ENCODE measurements at regions of chr9 and their contacts with region 1.

Region 1: DNA sequence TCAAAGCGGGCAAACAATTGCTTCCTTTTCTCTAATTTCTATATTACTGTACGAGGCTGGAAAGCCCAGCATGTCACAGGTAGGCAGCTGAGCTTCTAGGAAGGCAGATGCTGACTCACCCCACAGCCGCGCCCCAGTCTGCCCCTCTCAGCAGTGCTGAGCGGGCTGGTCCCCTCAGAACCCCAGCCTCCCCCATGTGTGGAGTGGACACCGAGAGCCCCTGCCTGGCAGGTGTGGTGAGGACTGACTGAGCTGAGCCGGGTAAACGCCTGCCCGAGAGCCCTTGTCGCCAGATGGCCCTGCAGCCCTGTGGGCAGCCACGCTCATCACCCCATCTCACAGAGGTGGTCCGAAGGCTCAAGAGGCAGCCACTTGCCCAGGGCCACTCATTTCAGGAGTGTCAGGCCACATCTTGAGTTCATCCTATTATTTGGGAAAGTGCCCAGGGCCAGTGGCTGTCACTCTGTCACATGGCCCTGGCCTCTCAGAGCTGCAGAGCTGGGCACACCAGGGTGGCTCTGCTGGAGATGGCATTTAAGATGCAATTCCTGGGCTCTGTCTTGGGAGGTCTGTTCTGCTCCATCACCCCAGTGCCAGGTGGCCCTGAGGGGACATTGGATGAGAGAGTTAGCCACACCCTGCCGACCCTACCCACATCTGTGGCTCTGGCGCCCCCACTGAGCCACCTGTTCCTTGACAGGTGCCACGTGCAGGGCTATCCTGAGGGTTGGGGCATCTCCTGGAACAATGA is 12.4 kb downstream of the CARD19 start:
- DNase-seq: no peak
- ATAC-seq: peak; percentile 51
- H3K4me3 ChIP-seq: no peak overlapping the region
- H3K27ac ChIP-seq: peak overlapping the region; percentile 23; the same call in 1 of the 2 replicates
- H3K4me1 ChIP-seq: peaks cover 0 to 18% of the 10 kb centered on the region in 2 experiments; a peak in 2 of 4 replicates
- H3K27me3 ChIP-seq: no peaks in the 10 kb centered on the region
- CTCF ChIP-seq: no peak
- POLR2A ChIP-seq: no peak
- RAD21 ChIP-seq: no peak

Region 2: DNA sequence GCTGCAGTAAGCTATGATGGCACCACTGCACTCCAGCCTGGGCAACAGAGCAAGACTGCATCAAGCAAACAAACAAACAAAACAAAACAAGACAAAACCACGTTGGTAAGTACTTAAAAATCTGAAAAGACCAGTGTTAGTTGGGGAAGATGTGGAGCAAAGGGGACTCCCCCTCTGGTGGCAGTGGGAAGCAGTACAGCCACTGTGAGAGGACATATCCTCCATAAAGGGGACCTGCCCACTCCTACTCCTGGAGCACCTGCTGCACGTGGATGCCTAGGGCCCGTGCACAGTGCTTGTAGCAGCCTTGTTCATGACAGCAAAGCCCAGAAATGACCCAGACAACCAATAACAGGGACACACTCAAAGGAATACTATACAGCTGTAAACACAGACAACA is 421.5 kb before region 1 on chr9:
- CTCF ChIA-PET with region 1: no interaction called
- POLR2A ChIA-PET with region 1: no interaction called
- RAD21 ChIA-PET with region 1: no interaction called
- intact Hi-C with region 1: no loop called
- DNase-seq: no peak
- ATAC-seq: peak; percentile 98
- H3K4me3 ChIP-seq: no peak overlapping the region
- H3K27ac ChIP-seq: no peak overlapping the region
- H3K4me1 ChIP-seq: no peaks in the 10 kb centered on the region
- H3K27me3 ChIP-seq: no peaks in the 10 kb centered on the region
- CTCF ChIP-seq: peak in 2 of 3 experiments; percentile 57 to 67; a peak in 4 of 6 replicates
- POLR2A ChIP-seq: no peak
- RAD21 ChIP-seq: no peak

Region 3: DNA sequence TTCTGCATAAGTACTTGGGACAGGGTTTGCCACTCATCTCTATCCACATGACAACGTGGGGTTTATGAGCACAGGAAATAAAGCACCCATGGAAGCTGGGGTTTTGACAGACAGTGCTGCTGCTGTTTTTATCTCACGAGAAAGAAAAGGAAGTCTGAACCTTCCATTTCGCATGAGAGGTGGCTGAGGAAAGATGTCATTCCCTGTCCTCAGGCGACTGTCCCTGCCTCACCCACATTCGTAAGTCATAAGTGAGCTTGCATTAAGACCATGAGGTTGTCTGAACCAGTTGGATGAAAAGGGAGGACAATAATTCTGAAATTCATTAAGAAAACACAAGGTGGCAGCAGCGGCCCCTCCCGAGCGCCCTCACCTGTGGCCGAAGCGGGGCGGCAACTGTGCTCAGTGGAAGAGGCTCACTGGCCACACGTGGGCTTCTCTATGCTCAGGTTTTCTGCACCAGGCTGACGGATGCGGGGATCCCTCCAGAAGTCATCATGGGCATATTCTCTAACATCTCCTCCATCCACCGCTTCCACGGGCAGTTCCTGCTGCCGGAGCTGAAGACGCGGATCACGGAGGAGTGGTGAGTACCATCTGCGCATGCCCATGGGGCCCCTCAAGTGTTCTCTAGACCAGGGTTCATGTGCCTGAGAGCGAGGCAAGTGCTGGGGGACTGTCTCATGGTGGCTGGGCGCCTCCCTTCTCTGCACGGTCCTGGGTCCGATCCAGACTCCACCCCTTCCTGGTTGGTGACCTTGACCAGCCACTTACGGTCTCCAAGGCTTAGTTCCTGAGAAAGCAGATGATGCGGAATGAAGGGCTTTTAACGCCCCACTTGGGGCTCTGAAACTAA is 104.7 kb before region 1 on chr9:
- CTCF ChIA-PET with region 1: interaction called, 18 read pairs
- POLR2A ChIA-PET with region 1: no interaction called
- RAD21 ChIA-PET with region 1: no interaction called
- intact Hi-C with region 1: no loop called
- DNase-seq: peak; percentile 73
- ATAC-seq: peak; percentile 94
- H3K4me3 ChIP-seq: peak overlapping the region; percentile 49 to 60
- H3K27ac ChIP-seq: peak overlapping the region; percentile 47; the same call in 1 of the 2 replicates
- H3K4me1 ChIP-seq: peaks cover 10 to 18% of the 10 kb centered on the region in 2 experiments; a peak in 3 of 4 replicates
- H3K27me3 ChIP-seq: no peaks in the 10 kb centered on the region
- CTCF ChIP-seq: peak; percentile 67 to 97 (median 82)
- POLR2A ChIP-seq: no peak
- RAD21 ChIP-seq: peak; percentile 94

Region 4: DNA sequence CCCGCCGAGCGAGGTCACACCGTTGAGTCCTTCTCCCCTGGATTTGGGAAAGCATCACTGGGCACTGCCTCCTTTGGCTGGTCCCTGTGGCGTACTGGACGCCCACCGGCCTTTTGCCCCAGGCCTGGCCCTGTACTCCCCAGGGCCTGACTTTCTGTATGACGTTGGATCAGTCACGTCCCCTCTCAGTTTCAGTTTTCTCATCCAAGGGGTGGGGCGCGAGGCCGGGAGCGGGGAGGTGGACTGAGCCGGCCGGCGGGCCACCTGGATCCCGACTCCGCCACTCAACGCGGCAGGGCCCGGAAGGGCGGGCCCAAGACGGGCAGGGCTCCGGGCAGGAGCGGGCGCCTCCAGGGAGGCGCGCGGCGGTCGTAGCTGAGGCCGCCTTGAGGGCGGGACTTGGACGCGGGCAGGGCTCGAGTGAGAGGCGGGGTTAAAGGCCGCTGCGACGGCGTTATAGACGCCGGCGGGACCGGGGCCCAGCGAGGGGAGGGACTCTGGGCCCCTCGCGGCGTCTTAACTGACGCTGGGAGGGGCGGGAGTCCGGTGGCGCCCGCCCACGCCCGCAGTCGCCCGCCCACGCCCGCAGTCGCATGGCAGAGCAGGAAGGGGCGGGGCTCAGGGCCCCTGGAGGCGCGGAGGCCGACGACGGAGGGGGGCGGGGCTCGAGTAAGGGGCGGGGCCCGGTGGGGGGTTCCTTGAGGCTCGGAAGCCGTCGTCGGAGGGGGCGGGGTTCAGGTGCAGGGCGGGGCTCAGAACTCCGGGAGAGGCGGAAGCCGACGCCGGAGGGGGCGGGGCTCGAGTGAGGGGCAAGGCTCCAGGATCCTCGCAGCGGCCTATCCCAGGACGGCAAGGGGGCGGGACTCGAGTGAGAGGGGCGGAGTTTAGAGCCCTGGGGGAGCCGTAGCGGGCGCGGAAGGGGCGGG is 13.0 kb before region 1 on chr9:
- CTCF ChIA-PET with region 1: interaction called, 12 read pairs
- POLR2A ChIA-PET with region 1: no interaction called
- RAD21 ChIA-PET with region 1: no interaction called
- intact Hi-C with region 1: no loop called
- DNase-seq: peak; percentile 96
- ATAC-seq: peak; percentile 84
- H3K4me3 ChIP-seq: peak overlapping the region; percentile 63 to 94
- H3K27ac ChIP-seq: peak overlapping the region; percentile 81
- H3K4me1 ChIP-seq: peaks cover 41 to 81% of the 10 kb centered on the region in 2 experiments
- H3K27me3 ChIP-seq: no peaks in the 10 kb centered on the region
- CTCF ChIP-seq: no peak
- POLR2A ChIP-seq: peak; percentile 48
- RAD21 ChIP-seq: no peak

Region 5: GRCh38 chr9:93119953-93120845 is 11.7 kb after region 1 on chr9:
- CTCF ChIA-PET with region 1: interaction called, 35 read pairs
- POLR2A ChIA-PET with region 1: interaction called, 5 read pairs
- RAD21 ChIA-PET with region 1: interaction called in 1 of 2 experiments, 3 read pairs
- intact Hi-C with region 1: no loop called
- DNase-seq: peak; percentile 83
- ATAC-seq: peak; percentile 94
- H3K4me3 ChIP-seq: no peak overlapping the region
- H3K27ac ChIP-seq: peak overlapping the region; percentile 82
- H3K4me1 ChIP-seq: peaks cover 13 to 19% of the 10 kb centered on the region in 2 experiments
- H3K27me3 ChIP-seq: no peaks in the 10 kb centered on the region
- CTCF ChIP-seq: peak in 2 of 3 experiments; percentile 25 to 45; a peak in 3 of 6 replicates
- POLR2A ChIP-seq: no peak
- RAD21 ChIP-seq: no peak

Region 6: GRCh38 chr9:93154315-93154903 is 45.9 kb after region 1 on chr9:
- CTCF ChIA-PET with region 1: interaction called, 5 read pairs
- POLR2A ChIA-PET with region 1: no interaction called
- RAD21 ChIA-PET with region 1: no interaction called
- intact Hi-C with region 1: loop called (anchors 5 kb)
- DNase-seq: no peak
- ATAC-seq: peak; percentile 89
- H3K4me3 ChIP-seq: no peak overlapping the region
- H3K27ac ChIP-seq: no peak overlapping the region
- H3K4me1 ChIP-seq: peaks cover 0 to 2% of the 10 kb centered on the region in 2 experiments; a peak in 3 of 4 replicates
- H3K27me3 ChIP-seq: no peaks in the 10 kb centered on the region
- CTCF ChIP-seq: peak; percentile 67 to 93 (median 93); a peak in 5 of 6 replicates
- POLR2A ChIP-seq: no peak
- RAD21 ChIP-seq: peak; percentile 70

Region 7: GRCh38 chr9:93566408-93567270 is 458.2 kb after region 1 on chr9:
- CTCF ChIA-PET with region 1: no interaction called
- POLR2A ChIA-PET with region 1: no interaction called
- RAD21 ChIA-PET with region 1: interaction called in 1 of 2 experiments, 3 read pairs
- intact Hi-C with region 1: loop called (anchors 1 kb)
- DNase-seq: peak; percentile 86
- ATAC-seq: peak; percentile 98
- H3K4me3 ChIP-seq: peak overlapping the region; percentile 67 to 70
- H3K27ac ChIP-seq: peak overlapping the region; percentile 74
- H3K4me1 ChIP-seq: peaks cover 4 to 12% of the 10 kb centered on the region in 2 experiments; a peak in 2 of 4 replicates
- H3K27me3 ChIP-seq: no peaks in the 10 kb centered on the region
- CTCF ChIP-seq: peak; percentile 74 to 93 (median 87)
- POLR2A ChIP-seq: peak; percentile 22
- RAD21 ChIP-seq: peak; percentile 80